PC-3 (cell line): ENCODE measurements at regions of chr11 and their contacts with region 1.

Region 1: DNA sequence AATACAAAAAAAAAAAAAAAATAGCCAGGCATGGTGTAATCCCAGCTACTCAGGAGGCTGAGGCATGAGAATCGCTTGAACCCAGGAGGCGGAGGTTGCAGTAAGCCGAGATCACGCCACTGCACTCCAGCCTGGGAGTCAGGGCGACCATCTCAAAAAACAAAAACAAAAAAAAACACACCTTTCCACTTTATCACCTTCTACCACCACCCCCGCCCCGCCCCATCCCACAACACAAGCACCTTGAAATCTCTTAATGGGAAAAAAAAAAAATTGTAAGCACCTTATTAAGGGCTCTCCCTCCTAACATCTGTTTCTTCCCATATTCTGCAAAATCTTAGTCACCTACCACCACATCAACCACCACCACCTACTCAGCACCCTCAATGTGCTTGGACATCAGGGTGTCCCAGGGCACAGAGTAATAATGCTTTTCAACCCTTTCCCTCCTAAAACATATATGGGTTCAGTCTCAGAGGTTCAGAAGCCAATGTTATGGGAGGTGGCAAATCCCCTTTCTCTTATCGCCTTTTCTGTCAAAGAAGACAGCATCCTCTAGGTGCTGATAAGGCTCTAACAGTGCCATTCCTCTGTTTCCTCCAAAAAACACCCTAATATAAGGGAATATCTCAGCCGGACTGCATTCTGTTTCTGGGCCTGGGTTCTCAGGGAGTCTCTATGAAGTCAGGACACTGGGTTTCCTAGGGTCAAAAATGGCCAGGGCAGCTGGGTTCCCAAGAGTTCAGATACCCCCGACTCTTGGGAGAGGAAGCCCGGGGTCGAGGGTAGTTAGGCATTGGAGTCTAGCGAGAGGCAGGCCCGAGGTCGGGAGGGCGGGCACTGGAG is 718 bp downstream of the INTS5 start:
- DNase-seq: no peak
- ATAC-seq: no peak
- H3K4me3 ChIP-seq: peak overlapping the region; percentile 76
- H3K27ac ChIP-seq: peak overlapping the region; percentile 33
- H3K4me1 ChIP-seq: peaks cover 11% of the 10 kb centered on the region
- H3K27me3 ChIP-seq: no peaks in the 10 kb centered on the region
- CTCF ChIP-seq: no peak

Region 2: GRCh38 chr11:62621567-62622470 is 30.6 kb before region 1 on chr11 and contains the start of gene B3GAT3:
- CTCF ChIA-PET with region 1: no interaction called
- POLR2A ChIA-PET with region 1: interaction called, 9 read pairs
- intact Hi-C with region 1: loop called (anchors 2 kb)
- DNase-seq: peak; percentile 99
- ATAC-seq: peak; percentile 95
- H3K4me3 ChIP-seq: peak within 1 kb of the TSS; percentile 88
- H3K27ac ChIP-seq: peak within 1 kb of the TSS; percentile 79
- H3K4me1 ChIP-seq: peaks cover 21% of the 10 kb centered on the region
- H3K27me3 ChIP-seq: no peaks in the 10 kb centered on the region
- CTCF ChIP-seq: no peak
- total RNA-seq, gene B3GAT3: 65.8 and 76.3 TPM in 2 replicates

Region 3: GRCh38 chr11:62665075-62665598 is 12.8 kb after region 1 on chr11 and contains the starts of genes C11orf98 and CSKMT:
- CTCF ChIA-PET with region 1: no interaction called
- POLR2A ChIA-PET with region 1: interaction called, 22 read pairs
- intact Hi-C with region 1: no loop called
- DNase-seq: peak; percentile 98
- ATAC-seq: peak; percentile 87
- H3K4me3 ChIP-seq: peak within 1 kb of the TSS; percentile 98
- H3K27ac ChIP-seq: peak within 1 kb of the TSS; percentile 36
- H3K4me1 ChIP-seq: peaks cover 26% of the 10 kb centered on the region
- H3K27me3 ChIP-seq: no peaks in the 10 kb centered on the region
- CTCF ChIP-seq: no peak
- total RNA-seq, gene C11orf98: 236 and 302 TPM in 2 replicates
- total RNA-seq, gene CSKMT: 12.9 and 16.3 TPM in 2 replicates

Region 4: DNA sequence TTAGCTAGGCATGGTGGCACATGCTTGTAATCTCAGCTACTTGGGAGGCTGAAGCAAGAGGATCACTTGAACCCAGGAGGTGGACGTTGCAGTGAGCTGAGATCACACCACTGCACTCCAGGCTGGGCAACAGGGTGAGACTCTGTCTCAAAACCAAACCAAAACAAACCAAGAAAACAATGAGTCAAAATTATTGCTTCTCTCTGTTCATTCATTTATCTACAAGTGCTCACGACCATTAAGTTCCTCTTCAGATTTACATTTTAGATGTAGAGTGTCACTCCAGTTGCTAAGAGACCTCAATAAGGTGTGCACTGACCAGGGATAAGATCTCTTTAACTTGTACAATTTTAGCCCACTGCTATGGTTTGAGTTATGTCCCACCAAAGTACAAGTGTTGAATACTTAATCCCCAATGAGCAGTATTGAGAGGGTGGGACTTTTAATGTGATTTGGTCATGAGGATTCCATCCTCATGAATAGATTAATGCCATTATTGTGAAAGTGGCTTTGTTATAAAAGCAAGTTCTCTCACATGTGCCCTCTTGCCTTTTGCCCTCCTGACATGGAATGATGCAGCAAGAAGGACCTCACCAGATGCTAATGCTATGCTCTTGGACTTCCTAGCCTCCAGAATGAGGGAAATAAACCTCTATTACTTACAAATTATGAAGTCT is 67.1 kb after region 1 on chr11:
- CTCF ChIA-PET with region 1: no interaction called
- POLR2A ChIA-PET with region 1: no interaction called
- intact Hi-C with region 1: no loop called
- DNase-seq: no peak
- ATAC-seq: no peak
- H3K4me3 ChIP-seq: no peak overlapping the region
- H3K27ac ChIP-seq: no peak overlapping the region
- H3K4me1 ChIP-seq: peaks cover 5% of the 10 kb centered on the region
- H3K27me3 ChIP-seq: no peaks in the 10 kb centered on the region
- CTCF ChIP-seq: no peak